Left ventricle myocardium superior (tissue), 1 donor: ENCODE measurements at regions of chr1 and their contacts with region 1.

Region 1: DNA sequence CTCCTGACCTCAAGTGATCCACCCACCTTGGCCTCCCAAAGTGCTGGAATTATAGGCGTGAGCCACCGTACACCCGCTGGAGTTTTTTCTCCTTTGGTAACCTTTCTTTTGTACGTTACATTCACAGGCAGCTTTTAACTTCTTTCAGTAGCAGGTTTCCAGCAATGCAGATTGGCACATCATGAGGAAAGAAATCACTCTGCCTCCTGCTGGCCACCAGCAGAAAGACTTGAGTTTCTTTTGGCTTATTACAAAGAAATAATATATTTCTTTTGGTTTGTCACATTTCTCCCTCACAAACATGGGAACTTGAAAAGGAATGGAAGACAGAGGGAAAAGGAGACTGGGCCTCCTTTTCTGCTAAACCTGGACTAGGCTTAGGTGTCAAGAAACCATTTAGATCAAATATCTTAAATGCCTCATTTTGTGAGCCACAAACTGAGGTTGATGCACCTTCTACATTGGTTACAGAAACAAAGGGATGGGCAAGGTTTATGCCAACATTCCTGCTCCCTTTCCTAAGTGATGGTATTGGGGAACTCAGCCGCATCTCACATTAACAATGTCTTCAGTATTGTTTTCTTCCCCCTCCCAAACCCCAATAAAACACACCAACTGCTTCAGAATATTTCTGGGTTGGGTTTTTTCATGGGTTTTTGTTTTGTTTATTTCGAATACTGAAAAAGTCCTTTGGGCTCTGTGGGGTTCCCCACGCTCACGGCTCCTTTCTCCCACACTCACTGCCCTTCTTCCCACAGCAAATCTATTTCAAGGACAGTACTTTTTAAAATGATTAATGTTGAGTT is 7.7 kb downstream of the ENSA start:
- DNase-seq: peak; percentile 53
- ATAC-seq: peak; percentile 18

Region 2: GRCh38 chr1:150561974-150562445 is 59.7 kb before region 1 on chr1:
- intact Hi-C with region 1: loop called (anchors 5 kb)
- DNase-seq: peak; percentile 97
- ATAC-seq: peak; percentile 85

Region 3: DNA sequence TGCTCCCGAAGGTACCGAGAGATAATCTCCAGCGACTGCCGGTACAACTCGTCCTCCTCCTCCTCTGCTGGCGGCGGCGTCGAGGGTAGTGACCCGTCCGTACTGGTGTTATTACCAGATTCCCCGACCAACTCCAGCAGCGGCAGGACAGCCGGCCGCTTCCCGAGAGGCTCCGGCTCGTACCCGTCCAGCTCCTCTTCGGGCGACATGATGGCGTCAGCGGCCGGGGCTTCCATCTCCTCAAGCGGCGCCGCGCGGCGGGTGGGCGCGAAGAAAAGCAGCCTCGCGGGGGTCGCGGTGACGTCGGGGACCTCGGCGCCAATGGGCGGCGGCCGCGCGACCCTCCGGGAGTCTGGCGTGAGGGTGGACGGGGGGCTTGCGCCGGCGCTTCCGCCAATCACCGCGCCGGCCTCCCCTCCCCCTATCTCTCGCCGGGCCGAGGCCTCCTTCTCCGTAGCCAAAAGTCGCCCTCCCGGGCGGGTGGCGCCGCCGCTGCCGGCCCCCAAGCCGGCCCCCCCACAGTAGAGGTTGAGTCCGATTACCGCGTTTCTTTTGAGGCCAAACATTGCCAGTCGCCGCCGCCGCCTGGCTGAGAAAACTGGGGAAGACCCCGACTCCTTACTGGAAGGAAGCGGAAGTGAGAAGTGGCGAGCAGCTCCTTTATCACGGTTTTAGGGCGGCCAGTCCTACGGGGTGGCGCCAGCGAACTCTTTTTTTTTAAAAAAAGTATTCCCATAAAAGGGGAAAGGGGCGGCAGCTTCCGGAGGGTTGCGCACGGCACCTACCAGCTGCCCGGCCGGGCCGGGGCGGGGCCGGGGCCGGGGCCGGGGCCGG is 42.5 kb before region 1 on chr1 and contains the start of gene MCL1:
- intact Hi-C with region 1: loop called (anchors 5 kb)
- DNase-seq: peak; percentile 97
- ATAC-seq: peak; percentile 91
- total RNA-seq, gene MCL1: 93.5 TPM